ENCODE measurements at regions of chr5 and their contacts with region 1.

Region 1: DNA sequence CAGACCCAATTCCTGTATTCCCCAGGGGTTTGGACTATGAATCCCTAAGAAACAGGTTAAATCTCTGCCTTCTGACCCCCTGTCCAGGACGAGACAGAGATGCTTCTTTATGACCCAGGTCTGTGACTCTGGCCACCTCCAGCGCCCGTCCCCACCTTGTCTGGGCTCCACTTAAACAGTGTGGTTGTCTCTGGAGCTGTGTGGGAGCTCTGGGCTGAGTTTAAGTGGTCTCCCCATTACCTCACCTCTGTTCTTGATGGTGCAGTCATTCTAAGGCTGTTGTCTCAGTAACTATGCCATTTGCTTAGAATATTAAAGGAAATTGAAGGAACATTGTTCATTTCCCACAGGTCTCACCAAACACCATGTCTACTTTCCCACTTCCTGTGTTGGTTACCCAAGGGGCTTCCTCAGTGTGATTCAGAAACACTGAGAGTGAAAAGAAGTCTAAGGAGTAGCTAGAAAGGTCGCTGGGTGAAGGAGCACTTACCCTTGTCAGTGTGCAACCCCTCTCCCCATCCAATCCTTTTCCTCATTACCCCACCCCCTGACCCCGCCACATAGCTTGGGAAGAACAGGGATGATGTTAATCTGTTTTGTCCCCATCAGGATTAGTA is 127.8 kb upstream of the CKMT2 start:
- DNase-seq: no peak
- H3K4me3 Mint-ChIP-seq: no peak overlapping the region
- H3K27ac Mint-ChIP-seq: no peak overlapping the region
- H3K4me1 Mint-ChIP-seq: no peaks in the 10 kb centered on the region
- H3K27me3 Mint-ChIP-seq: peaks cover 47% of the 10 kb centered on the region
- CTCF ChIP-seq: no peak

Region 2: GRCh38 chr5:80686757-80687156 is 418.6 kb before region 1 on chr5:
- CTCF ChIA-PET with region 1: interaction called, 29 read pairs
- POLR2A ChIA-PET with region 1: no interaction called
- intact Hi-C with region 1: loop called (anchors 1 kb)
- DNase-seq: peak; percentile 25
- H3K4me3 Mint-ChIP-seq: no peak overlapping the region
- H3K27ac Mint-ChIP-seq: no peak overlapping the region
- H3K4me1 Mint-ChIP-seq: no peaks in the 10 kb centered on the region
- H3K27me3 Mint-ChIP-seq: no peaks in the 10 kb centered on the region
- CTCF ChIP-seq: peak; percentile 29

Region 3: DNA sequence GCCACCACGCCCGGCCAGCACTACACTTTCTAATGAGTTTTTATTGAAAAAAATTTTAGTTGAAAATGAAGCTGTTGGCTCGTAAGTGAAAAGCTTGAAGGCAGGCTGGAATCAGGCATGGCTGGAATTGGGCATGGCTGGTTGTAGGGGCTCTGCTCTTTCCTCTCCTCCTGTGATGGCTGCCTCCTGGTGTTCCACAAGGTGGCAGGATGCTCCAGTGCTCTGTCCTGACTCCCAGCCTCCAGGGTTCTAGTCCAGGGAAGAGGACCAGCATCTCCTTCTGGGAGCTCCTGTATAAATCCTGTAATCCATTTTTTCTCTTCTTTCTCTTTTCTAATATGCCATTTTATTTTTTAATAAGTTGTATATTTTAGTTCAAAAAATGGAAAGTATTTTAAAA is 393.4 kb before region 1 on chr5:
- CTCF ChIA-PET with region 1: interaction called, 9 read pairs
- POLR2A ChIA-PET with region 1: interaction called, 3 read pairs
- intact Hi-C with region 1: loop called (anchors 1 kb)
- DNase-seq: peak; percentile 48
- H3K4me3 Mint-ChIP-seq: no peak overlapping the region
- H3K27ac Mint-ChIP-seq: no peak overlapping the region
- H3K4me1 Mint-ChIP-seq: no peaks in the 10 kb centered on the region
- H3K27me3 Mint-ChIP-seq: no peaks in the 10 kb centered on the region
- CTCF ChIP-seq: peak; percentile 41

Region 4: DNA sequence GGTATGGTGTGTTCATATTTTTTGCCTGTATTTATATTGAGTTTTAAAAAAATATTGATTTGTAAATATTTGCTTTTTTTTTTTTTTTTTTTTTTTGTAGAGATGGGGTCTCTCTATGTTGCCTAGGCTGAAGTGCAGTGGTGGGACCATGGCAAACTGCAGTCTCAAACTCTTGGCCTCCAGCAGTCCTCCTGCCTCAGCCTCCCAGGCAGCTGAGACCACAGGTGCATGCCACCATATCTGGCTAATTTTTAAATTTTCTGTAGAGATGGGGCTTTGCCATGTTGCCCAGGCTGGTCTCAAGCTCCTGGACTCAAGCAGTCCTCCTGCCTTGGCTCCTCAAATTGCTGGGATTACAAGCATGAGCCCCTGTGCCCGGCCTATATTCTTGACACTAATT is 66.9 kb before region 1 on chr5:
- CTCF ChIA-PET with region 1: no interaction called
- POLR2A ChIA-PET with region 1: no interaction called
- intact Hi-C with region 1: no loop called
- DNase-seq: no peak
- H3K4me3 Mint-ChIP-seq: no peak overlapping the region
- H3K27ac Mint-ChIP-seq: no peak overlapping the region
- H3K4me1 Mint-ChIP-seq: no peaks in the 10 kb centered on the region
- H3K27me3 Mint-ChIP-seq: peaks cover 16% of the 10 kb centered on the region
- CTCF ChIP-seq: no peak

Region 5: GRCh38 chr5:81093537-81094196 is 11.7 kb before region 1 on chr5:
- CTCF ChIA-PET with region 1: interaction called, 18 read pairs
- POLR2A ChIA-PET with region 1: interaction called, 3 read pairs
- intact Hi-C with region 1: no loop called
- DNase-seq: no peak
- H3K4me3 Mint-ChIP-seq: no peak overlapping the region
- H3K27ac Mint-ChIP-seq: no peak overlapping the region
- H3K4me1 Mint-ChIP-seq: no peaks in the 10 kb centered on the region
- H3K27me3 Mint-ChIP-seq: peaks cover 27% of the 10 kb centered on the region
- CTCF ChIP-seq: no peak

Region 6: GRCh38 chr5:81121836-81122630 is 16.7 kb after region 1 on chr5:
- CTCF ChIA-PET with region 1: interaction called, 19 read pairs
- POLR2A ChIA-PET with region 1: no interaction called
- intact Hi-C with region 1: no loop called
- DNase-seq: no peak
- H3K4me3 Mint-ChIP-seq: no peak overlapping the region
- H3K27ac Mint-ChIP-seq: no peak overlapping the region
- H3K4me1 Mint-ChIP-seq: no peaks in the 10 kb centered on the region
- H3K27me3 Mint-ChIP-seq: peaks cover 32% of the 10 kb centered on the region
- CTCF ChIP-seq: no peak